Psoas muscle (tissue), 8 donors: ENCODE measurements at regions of chrX and their contacts with region 1.

Region 1: GRCh38 chrX:37825209-37825842 is 22.0 kb downstream of the DYNLT3 start:
- DNase-seq: no peak
- ATAC-seq: peak; percentile 43 to 69 (median 56)
- H3K4me3 ChIP-seq: no peak overlapping the region
- H3K27ac ChIP-seq: no peak overlapping the region
- H3K4me1 ChIP-seq: no peaks in the 10 kb centered on the region
- H3K27me3 ChIP-seq: peaks cover 0 to 3% (median 0%) of the 10 kb centered on the region in 3 donors
- CTCF ChIP-seq: peak; percentile 89

Region 2: DNA sequence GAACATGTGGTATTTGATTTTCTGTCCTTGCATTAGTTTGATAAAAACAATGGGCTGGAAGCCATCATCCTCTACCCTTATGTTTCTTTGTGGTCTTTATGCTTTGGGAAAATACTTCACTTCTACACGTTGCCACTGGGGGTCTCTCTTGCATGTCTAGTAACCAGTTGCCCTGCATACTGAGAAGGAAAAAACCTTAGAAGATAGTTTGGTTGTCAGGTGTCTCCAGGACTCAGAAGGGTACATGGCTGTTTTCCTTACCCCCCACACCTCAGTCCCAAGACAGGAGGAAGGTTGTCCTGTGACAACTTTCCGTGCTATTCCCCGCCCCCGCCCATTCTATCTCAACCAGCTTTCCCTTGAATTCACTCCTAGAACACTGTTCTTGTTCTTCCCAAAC is 316.0 kb before region 1 on chrX:
- intact Hi-C with region 1: loop called (anchors 5 to 10 kb)
- DNase-seq: no peak
- ATAC-seq: peak; percentile 56 to 69 (median 64)
- H3K4me3 ChIP-seq: no peak overlapping the region
- H3K27ac ChIP-seq: no peak overlapping the region
- H3K4me1 ChIP-seq: no peaks in the 10 kb centered on the region
- H3K27me3 ChIP-seq: no peaks in the 10 kb centered on the region
- CTCF ChIP-seq: peak; percentile 43

Region 3: GRCh38 chrX:37578045-37578444 is 247.3 kb before region 1 on chrX:
- intact Hi-C with region 1: loop called in 1 of 2 experiments (anchors 5 kb)
- DNase-seq: no peak
- ATAC-seq: no peak
- H3K4me3 ChIP-seq: no peak overlapping the region
- H3K27ac ChIP-seq: no peak overlapping the region
- H3K4me1 ChIP-seq: no peaks in the 10 kb centered on the region
- H3K27me3 ChIP-seq: no peaks in the 10 kb centered on the region
- CTCF ChIP-seq: no peak

Region 4: GRCh38 chrX:37745354-37745753 is 80.0 kb before region 1 on chrX:
- intact Hi-C with region 1: loop called (anchors 2 to 10 kb)
- DNase-seq: peak; percentile 62 to 80
- ATAC-seq: peak in 3 of 4 donors; percentile 53 to 84 (median 68)
- H3K4me3 ChIP-seq: no peak overlapping the region
- H3K27ac ChIP-seq: no peak overlapping the region
- H3K4me1 ChIP-seq: no peaks in the 10 kb centered on the region
- H3K27me3 ChIP-seq: peaks cover 0 to 12% (median 0%) of the 10 kb centered on the region in 3 donors
- CTCF ChIP-seq: peak; percentile 80